ENCODE measurements at regions of chr9 and their contacts with region 1.

Region 1: GRCh38 chr9:79847074-79847473 is 275.3 kb downstream of the TLE4 start:
- DNase-seq: no peak
- ATAC-seq: no peak
- H3K4me3 ChIP-seq: no peak overlapping the region
- H3K4me3 Mint-ChIP-seq: no peak overlapping the region
- H3K27ac ChIP-seq: no peak overlapping the region
- H3K27ac Mint-ChIP-seq: no peak overlapping the region
- H3K4me1 ChIP-seq: no peaks in the 10 kb centered on the region
- H3K4me1 Mint-ChIP-seq: no peaks in the 10 kb centered on the region
- H3K27me3 ChIP-seq: no peaks in the 10 kb centered on the region
- H3K27me3 Mint-ChIP-seq: peaks cover 0 to 9% (median 3%) of the 10 kb centered on the region in 5 donors

Region 2: GRCh38 chr9:79799691-79800335 is 47.3 kb before region 1 on chr9:
- CTCF ChIA-PET with region 1: no interaction called
- POLR2A ChIA-PET with region 1: no interaction called
- intact Hi-C with region 1: loop called in 1 of 2 experiments (anchors 10 kb)
- DNase-seq: no peak
- ATAC-seq: no peak
- H3K4me3 ChIP-seq: no peak overlapping the region
- H3K4me3 Mint-ChIP-seq: no peak overlapping the region
- H3K27ac ChIP-seq: no peak overlapping the region
- H3K27ac Mint-ChIP-seq: no peak overlapping the region
- H3K4me1 ChIP-seq: no peaks in the 10 kb centered on the region
- H3K4me1 Mint-ChIP-seq: no peaks in the 10 kb centered on the region
- H3K27me3 ChIP-seq: no peaks in the 10 kb centered on the region
- H3K27me3 Mint-ChIP-seq: no peaks in the 10 kb centered on the region

Measured in naive thymus-derived CD4-positive, alpha-beta T cell (primary cell).